Activated CD4-positive, alpha-beta T cell treated with anti-CD3 and anti-CD28 coated beads, Interleukin-2, amount 10 ng/mL, durations not matched to agents 24 days and 14 days (primary cell): ENCODE measurements at regions of chr11 and their contacts with region 1.

Region 1: DNA sequence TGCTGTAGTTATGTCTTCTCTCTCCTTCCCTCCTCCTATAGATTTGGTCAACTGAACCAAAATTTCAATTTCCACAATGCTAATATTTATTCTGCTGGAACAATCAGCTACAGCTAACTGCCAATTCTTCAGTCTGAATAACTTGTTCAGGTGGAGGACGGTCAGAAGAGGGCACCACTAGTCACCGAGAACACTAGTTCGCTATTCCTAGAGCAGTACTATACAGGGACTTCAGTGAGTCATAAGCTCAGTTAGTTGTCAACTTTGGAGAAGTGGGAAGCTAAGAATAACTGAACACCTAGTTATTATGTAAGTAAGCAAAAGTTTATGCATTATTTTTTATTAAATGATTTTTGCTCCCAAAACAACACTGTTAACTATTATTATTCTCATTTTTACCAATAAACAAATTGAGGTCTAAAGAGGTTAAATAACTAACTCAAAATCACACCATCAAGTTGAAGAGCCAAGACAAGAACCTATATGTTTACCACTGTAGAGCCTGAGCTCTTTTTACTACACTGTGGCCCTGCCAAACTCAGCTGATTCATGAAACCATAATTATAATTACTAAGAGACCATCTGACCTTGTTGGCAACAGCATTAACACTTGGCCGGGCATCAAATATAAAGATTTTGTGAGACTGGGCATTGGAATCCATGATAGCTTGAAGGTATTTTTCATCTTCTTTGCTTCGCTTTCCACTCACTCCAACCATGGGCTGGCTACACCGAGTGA is 59.0 kb downstream of the CEP57 start:
- DNase-seq: peak; percentile 70
- H3K4me3 Mint-ChIP-seq: no peak overlapping the region
- H3K27ac Mint-ChIP-seq: no peak overlapping the region
- H3K4me1 Mint-ChIP-seq: no peaks in the 10 kb centered on the region
- H3K27me3 Mint-ChIP-seq: no peaks in the 10 kb centered on the region

Region 2: DNA sequence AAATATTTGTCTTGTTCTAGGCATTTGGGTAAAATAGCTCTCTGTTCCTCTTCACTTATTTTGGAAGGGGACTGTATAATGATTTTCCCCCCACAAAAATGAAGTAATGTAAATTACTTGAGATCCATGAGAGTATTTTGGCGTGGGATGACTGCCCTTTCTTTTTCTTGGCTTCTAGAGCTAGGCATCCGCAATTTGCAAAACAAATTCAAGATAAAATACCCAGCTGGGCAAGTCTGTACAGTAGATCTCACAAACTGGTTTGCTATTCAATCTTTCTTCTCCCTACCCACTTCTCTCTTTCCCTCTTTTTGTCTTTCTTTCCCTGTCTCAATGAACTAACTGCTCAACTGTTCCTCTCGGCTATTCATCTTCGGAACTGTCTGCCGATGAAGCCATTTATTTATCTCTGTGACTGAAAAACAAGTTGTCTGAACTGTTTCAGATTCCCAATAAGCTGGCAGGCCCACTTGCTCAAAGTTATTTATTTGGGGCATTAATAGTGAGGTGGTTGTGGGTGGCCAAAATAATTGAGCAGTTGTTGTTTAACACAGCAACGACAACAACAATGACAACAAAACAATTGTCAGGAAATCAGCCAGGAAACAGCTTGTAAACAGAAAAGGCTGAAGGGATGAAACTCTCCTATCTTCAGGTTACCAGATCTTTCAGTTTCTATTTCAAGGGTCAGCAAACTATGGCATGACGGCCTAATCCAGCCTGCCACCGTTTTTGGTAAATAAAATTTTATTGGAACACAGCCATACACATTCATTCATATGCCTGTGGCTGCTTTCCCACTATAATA is 150.5 kb after region 1 on chr11:
- intact Hi-C with region 1: loop called (anchors 10 kb)
- DNase-seq: no peak
- H3K4me3 Mint-ChIP-seq: no peak overlapping the region
- H3K27ac Mint-ChIP-seq: peak overlapping the region; percentile 34
- H3K4me1 Mint-ChIP-seq: peaks cover 5% of the 10 kb centered on the region
- H3K27me3 Mint-ChIP-seq: no peaks in the 10 kb centered on the region

Region 3: GRCh38 chr11:96242971-96243647 is 393.9 kb after region 1 on chr11:
- intact Hi-C with region 1: loop called (anchors 5 kb)
- DNase-seq: peak; percentile 94
- H3K4me3 Mint-ChIP-seq: peak overlapping the region; percentile 86
- H3K27ac Mint-ChIP-seq: peak overlapping the region; percentile 98
- H3K4me1 Mint-ChIP-seq: peaks cover 48% of the 10 kb centered on the region
- H3K27me3 Mint-ChIP-seq: no peaks in the 10 kb centered on the region